ENCODE measurements at regions of chr9 and their contacts with region 1.

Region 1: DNA sequence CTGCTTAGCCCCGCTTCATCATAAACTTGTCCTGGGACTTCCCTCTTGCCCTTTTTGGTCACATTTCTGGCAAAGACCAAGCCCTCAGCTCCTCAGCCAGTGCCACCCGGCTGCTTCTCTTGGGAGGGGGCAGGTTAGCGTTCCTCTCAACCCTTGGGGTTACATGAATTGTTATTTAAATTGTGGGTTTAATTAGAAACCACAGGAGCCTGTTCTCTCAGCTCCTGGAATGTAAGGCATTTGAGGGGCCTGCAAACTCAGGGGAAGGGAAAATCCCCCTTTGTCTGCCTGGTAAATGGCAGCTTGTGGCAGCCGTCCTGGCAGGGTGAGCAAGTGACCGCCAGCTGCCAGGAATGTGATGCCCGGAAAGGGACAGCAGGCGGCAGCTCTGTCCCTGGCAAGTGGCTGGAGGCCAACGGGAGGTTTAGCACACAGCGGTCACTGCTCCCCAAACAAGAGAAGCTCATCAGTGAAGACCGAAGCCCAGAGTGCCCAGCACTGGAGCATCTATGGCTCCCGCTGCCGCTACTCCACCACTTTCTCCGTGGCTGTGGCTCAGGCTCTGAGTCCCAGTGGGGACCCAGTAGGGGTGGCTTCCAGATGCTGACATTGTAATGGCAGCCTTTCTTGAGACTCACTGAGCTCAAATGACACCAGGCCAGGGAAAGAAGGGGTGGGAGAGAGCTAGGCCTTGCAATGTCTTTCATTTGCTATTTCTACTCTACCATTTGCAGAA is 51.7 kb downstream of the SHB start:
- DNase-seq: peak; percentile 73 to 85
- ATAC-seq: peak; percentile 92 to 99 (median 94)
- H3K4me3 ChIP-seq: peak overlapping the region; percentile 8
- H3K27ac ChIP-seq: peak overlapping the region; percentile 74
- H3K4me1 ChIP-seq: peaks cover 46% of the 10 kb centered on the region
- H3K27me3 ChIP-seq: no peaks in the 10 kb centered on the region
- CTCF ChIP-seq: peak; percentile 58

Region 2: GRCh38 chr9:37398464-37399025 is 618.8 kb before region 1 on chr9:
- intact Hi-C with region 1: no loop called
- DNase-seq: no peak
- ATAC-seq: no peak
- H3K4me3 ChIP-seq: no peak overlapping the region
- H3K27ac ChIP-seq: no peak overlapping the region
- H3K4me1 ChIP-seq: no peaks in the 10 kb centered on the region
- H3K27me3 ChIP-seq: no peaks in the 10 kb centered on the region
- CTCF ChIP-seq: no peak

Region 3: GRCh38 chr9:37511016-37512010 is 506.0 kb before region 1 on chr9:
- intact Hi-C with region 1: no loop called
- DNase-seq: no peak
- ATAC-seq: peak in 2 of 4 donors; percentile 33 to 43
- H3K4me3 ChIP-seq: no peak overlapping the region
- H3K27ac ChIP-seq: no peak overlapping the region
- H3K4me1 ChIP-seq: no peaks in the 10 kb centered on the region
- H3K27me3 ChIP-seq: no peaks in the 10 kb centered on the region
- CTCF ChIP-seq: no peak

Region 4: DNA sequence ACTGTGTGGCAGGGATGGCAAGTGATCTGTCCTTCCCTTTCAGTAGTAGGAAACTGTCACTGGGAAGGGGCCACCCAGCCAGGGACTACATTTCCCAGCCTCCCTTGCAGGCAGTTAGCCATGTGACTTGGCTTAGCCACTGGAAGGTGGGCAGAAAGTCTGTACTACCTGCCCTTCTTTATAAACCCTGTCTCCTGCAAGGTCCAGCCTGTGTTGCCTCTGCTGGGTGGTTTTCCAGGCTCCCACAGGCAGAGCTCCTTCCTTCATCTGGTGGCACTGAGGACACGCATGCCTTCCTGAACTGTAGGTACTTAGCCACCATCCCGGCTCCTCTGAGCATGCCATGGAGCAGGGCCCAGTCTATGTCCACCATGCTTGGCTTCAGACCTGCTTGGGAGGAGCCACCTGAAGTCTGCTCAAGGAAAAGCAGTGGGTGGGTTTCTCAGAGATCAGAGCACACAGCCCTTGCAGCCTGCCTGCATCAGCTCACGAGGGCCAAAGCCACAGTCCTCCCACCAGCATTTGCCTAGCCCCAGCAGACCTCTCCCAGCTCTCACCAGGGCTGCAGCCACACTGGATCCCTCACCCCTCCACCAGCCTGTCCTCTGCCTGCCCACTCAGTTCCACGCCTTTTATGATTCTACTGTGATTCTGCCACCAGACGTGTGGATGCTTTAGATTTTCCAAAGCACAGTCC is 96.7 kb before region 1 on chr9:
- intact Hi-C with region 1: loop called in 1 of 2 experiments (anchors 5 kb)
- DNase-seq: no peak
- ATAC-seq: peak in 1 of 4 donors; percentile 50
- H3K4me3 ChIP-seq: no peak overlapping the region
- H3K27ac ChIP-seq: no peak overlapping the region
- H3K4me1 ChIP-seq: peaks cover 4% of the 10 kb centered on the region
- H3K27me3 ChIP-seq: no peaks in the 10 kb centered on the region
- CTCF ChIP-seq: no peak

Region 5: DNA sequence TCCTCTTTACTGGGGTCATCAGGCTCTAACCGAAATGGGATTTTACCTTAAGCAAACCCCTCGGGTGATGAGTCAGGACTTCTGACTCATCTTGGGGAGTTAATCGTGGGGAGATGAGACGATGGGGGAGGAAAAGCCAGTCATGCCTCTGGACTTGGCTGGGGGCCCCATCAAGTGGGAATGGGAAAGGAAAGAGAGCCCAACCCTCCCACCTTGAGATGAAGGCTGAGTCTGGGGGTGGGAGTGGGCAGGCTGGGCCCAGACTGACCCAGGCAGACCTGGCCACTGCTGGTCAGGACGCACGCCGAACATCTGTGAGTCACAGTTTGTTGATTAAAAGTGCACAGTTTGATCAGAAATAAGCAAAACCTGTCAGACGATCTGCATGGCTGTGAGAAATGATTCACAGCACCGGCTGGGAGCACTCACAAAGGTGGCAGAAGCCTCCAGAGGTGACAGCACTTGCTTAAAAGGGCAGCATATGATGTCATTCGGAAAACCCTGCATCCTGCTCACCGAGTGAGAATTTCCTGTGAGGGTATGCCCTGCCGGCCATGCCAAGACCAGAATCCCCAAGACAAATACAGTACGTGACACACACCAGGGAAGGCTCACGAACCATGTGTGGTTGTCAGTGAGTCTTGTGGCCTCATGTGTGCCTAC is 63.4 kb before region 1 on chr9:
- intact Hi-C with region 1: loop called in 1 of 2 experiments (anchors 10 kb)
- DNase-seq: peak in 1 of 2 donors; percentile 51
- ATAC-seq: peak; percentile 84 to 91 (median 90)
- H3K4me3 ChIP-seq: no peak overlapping the region
- H3K27ac ChIP-seq: peak overlapping the region; percentile 85
- H3K4me1 ChIP-seq: peaks cover 18% of the 10 kb centered on the region
- H3K27me3 ChIP-seq: no peaks in the 10 kb centered on the region
- CTCF ChIP-seq: no peak

Region 6: DNA sequence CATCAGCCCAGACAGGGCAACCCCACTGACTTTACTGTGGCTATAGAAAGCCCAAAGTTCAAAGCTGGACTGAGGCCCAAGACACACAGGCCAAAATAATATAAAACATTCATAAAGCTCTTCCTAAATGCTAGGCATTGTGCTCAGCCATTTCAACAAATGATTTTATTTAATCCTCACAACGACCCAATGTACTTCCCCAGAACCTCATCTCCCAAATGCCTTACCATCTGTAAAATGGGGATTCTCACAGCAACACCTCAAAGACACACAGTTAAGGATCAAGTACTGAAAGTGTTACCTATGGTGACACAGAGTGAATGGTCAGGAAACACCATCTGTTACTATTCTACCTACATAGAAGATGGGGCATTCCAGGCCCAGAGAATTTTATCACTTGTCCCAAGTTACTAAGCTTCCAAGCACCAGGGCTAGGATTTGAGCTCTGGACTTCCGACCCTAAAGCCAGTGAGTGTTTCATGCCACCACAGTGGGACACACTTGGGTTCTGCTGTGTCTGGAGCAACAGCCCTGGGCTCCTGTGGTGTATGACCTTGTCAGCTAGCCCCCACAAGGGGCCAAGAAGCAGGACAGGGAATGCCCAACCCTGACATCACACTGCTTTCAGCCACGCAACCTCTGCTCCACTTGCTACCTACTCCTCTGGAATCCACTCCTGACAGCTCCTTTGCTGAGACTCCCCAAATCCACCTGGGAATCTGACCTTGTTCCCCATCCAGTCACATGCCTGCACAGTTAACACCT is 36.6 kb after region 1 on chr9:
- intact Hi-C with region 1: loop called in 1 of 2 experiments (anchors 5 kb)
- DNase-seq: no peak
- ATAC-seq: no peak
- H3K4me3 ChIP-seq: no peak overlapping the region
- H3K27ac ChIP-seq: no peak overlapping the region
- H3K4me1 ChIP-seq: peaks cover 20% of the 10 kb centered on the region
- H3K27me3 ChIP-seq: no peaks in the 10 kb centered on the region
- CTCF ChIP-seq: no peak

Region 7: DNA sequence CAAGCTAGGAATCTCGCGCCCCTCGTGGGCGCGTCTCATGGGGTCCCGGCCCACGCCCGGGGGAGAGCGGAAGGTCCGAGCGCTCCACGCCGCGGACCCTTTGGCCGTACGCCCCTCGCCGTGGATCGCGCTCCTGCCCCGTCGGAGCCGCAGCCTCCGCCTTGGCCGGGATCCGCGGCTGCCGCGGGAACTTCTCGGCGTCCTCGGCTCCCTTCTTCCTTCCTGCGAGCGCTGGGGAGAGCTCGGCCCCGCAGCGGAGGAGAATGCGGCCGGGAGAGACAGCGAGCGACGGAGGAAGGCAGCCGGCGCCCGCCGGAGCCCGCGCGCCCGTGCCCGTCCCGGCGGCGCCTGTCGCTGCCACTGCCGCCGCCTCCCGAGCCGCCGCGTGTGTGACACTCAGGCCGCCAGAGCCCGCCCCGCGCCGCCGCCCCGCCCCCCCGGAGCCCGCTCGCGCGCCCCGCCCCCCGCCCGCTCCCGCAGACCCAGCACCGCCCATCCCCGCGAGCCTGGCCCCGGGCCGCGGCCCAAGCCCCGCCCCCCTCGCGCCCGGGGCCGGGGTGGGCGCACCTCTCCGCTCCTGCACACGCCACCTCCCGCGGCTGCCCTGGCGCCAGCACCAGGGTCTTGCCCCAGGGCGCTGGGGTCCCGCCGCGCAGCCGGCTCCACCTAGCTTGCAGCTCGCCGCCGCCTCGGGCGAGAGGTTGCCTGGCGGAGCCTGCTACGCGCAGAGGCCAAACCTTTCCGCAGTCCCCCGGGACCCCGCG is 51.7 kb after region 1 on chr9 and contains the start of gene SHB:
- intact Hi-C with region 1: loop called in 1 of 2 experiments (anchors 5 kb)
- DNase-seq: peak; percentile 86 to 89
- ATAC-seq: peak; percentile 73 to 81 (median 78)
- H3K4me3 ChIP-seq: peak within 1 kb of the TSS; percentile 98
- H3K27ac ChIP-seq: peak within 1 kb of the TSS; percentile 97
- H3K4me1 ChIP-seq: peaks cover 34% of the 10 kb centered on the region
- H3K27me3 ChIP-seq: no peaks in the 10 kb centered on the region
- CTCF ChIP-seq: no peak
- total RNA-seq, gene SHB: 4.8 to 26.2 (median 12.4) TPM

Region 8: DNA sequence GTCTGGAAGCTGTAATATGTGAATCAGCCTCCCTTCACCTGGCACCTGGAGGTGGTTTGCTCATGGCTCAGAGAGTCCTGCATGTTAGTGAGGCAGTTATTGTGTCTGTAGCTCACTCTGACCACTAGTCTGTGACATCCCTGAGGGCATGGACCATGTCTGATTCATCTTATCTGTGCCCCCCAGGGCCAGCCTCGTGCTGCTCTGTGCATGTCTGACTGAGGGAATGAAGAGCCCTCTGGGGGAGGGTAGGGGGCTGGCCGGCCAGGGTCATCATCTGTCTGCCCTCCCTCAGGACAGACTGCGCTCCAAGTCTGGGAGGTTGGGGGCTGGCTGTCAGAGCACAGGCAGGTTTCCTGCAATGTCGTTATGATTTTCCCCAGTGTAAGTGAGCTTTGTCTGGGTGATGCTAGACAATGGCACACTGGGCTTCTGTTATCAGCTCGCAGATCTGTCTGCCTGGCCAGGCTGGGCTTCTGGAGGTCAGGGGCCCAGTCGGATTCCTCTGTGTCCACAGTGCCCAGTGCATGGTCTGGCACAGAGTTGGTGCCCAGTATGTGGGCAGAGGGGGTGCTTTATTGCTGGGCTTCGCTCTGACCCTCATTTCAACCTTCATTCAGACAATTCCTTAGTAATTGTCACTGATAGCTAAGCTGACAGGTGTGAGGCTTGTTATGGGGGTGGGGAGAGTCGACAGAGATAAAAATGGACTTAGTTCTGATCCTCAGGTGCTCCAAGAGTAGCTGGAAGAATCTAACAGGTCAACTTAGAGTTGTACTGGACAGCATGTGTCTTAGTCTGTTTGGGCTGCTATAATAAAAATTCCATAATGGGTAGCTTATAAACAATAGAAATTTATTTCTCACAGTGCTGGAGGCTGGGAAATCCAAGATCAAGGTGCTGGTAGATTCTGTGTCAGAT is 137.4 kb after region 1 on chr9:
- intact Hi-C with region 1: loop called in 1 of 2 experiments (anchors 10 kb)
- DNase-seq: no peak
- ATAC-seq: no peak
- H3K4me3 ChIP-seq: no peak overlapping the region
- H3K27ac ChIP-seq: no peak overlapping the region
- H3K4me1 ChIP-seq: no peaks in the 10 kb centered on the region
- H3K27me3 ChIP-seq: no peaks in the 10 kb centered on the region
- CTCF ChIP-seq: no peak

Region 9: DNA sequence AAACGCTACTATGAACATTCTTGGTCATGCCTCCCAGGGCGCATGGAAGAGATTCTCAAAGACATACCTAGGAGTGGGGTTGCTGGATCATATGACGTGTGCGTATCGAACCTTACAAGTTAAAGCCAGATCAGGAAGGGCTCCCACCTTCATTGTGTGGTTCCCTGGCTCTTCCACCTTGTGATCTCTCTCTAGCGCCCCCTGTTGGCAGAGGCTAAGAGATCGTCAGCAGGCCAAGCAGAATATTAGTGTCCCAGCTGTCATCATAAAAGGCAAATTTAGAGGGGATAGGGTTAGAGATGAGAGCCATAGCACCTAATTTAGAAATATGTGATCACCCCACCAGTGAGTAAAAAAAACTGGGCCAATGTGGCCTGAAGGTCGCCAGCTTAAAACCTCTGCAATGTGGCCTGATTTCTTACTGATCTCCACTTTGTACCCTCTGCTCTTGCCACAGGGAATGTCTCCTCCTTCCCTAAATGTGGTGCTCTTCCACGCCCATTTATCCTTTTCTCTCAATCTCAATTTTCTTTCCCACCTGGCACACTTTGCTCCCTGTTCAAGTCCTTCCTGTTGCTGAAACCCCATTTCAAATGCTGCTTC is 143.4 kb after region 1 on chr9:
- intact Hi-C with region 1: loop called (anchors 10 kb)
- DNase-seq: peak; percentile 47 to 71
- ATAC-seq: peak; percentile 73 to 82 (median 80)
- H3K4me3 ChIP-seq: no peak overlapping the region
- H3K27ac ChIP-seq: no peak overlapping the region
- H3K4me1 ChIP-seq: no peaks in the 10 kb centered on the region
- H3K27me3 ChIP-seq: no peaks in the 10 kb centered on the region
- CTCF ChIP-seq: peak; percentile 86